Naive thymus-derived CD4-positive, alpha-beta T cell (primary cell): ENCODE measurements at regions of chr19 and their contacts with region 1.

Region 1: DNA sequence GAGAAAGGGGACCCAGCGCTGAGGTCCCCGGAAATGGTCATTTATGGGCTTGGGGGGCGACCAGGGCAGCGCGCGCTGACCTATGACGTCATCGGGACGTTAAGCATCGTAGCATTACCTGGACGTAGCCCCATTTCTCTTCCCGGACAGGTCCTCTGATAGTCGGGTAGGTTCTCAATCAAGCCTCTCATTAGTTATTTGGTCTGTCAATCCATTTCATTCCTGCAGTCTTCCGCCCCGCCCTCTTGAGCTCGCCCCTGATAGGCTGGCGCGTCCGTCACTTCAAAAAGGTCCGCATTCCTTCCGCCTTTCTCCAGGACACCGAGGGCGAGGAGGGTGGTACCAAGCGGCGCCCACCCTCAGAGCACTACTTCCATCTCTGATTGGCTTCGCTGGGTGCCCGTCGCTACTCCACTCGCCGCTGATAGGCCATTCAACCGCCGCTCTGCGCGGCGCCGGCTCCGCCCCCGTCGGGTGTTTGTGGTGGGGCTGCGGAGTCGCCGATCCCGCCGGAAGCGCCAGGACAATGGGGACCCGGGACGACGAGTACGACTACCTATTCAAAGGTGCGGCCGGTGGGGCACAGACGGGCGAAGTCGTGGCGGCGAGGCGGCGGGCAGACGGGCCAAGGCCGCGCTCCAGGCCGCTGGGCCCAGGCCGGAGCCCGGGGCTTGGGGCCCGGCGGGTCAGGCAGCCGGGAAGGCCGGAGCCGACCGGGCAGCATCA is at the start of gene RAB11B:
- DNase-seq: peak; percentile 81 to 99 (median 98)
- ATAC-seq: peak; percentile 93
- H3K4me3 ChIP-seq: peak within 1 kb of the TSS; percentile 87
- H3K4me3 Mint-ChIP-seq: peak within 1 kb of the TSS; percentile 87 to 98 (median 92)
- H3K27ac ChIP-seq: peak within 1 kb of the TSS; percentile 98
- H3K27ac Mint-ChIP-seq: peak within 1 kb of the TSS; percentile 82 to 98 (median 93)
- H3K4me1 ChIP-seq: peaks cover 4 to 8% of the 10 kb centered on the region in 2 donors
- H3K4me1 Mint-ChIP-seq: peaks cover 18 to 36% (median 28%) of the 10 kb centered on the region in 7 donors
- H3K27me3 ChIP-seq: no peaks in the 10 kb centered on the region
- H3K27me3 Mint-ChIP-seq: no peaks in the 10 kb centered on the region
- total RNA-seq, gene RAB11B: 77.4 to 113 (median 103) TPM

Region 2: DNA sequence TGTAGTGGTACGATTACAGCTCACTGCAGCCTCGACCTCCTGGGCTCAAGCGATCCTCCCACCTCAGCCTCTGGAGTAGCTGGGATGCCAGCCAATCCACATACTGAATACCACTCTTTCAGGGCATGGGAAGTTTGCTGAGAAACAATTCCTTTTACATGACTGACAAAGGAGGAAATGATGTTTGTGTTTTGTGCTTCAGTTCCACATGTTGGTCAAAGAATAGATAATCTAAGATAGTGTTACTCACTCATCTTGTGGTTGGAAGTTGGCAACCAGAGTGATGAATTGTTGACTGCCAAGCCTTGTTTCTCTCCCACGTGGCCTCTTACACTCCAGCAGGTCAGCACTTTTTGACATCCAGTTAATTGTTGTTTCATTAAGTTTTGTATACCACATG is 1376.4 kb before region 1 on chr19:
- CTCF ChIA-PET with region 1: no interaction called
- POLR2A ChIA-PET with region 1: no interaction called
- intact Hi-C with region 1: no loop called
- DNase-seq: no peak
- ATAC-seq: peak; percentile 79
- H3K4me3 ChIP-seq: no peak overlapping the region
- H3K4me3 Mint-ChIP-seq: no peak overlapping the region
- H3K27ac ChIP-seq: no peak overlapping the region
- H3K27ac Mint-ChIP-seq: peak overlapping the region in 2 of 9 donors; percentile 0 to 10
- H3K4me1 ChIP-seq: peaks cover 13 to 18% of the 10 kb centered on the region in 2 donors
- H3K4me1 Mint-ChIP-seq: peaks cover 9 to 45% (median 34%) of the 10 kb centered on the region in 7 donors
- H3K27me3 ChIP-seq: no peaks in the 10 kb centered on the region
- H3K27me3 Mint-ChIP-seq: no peaks in the 10 kb centered on the region

Region 3: DNA sequence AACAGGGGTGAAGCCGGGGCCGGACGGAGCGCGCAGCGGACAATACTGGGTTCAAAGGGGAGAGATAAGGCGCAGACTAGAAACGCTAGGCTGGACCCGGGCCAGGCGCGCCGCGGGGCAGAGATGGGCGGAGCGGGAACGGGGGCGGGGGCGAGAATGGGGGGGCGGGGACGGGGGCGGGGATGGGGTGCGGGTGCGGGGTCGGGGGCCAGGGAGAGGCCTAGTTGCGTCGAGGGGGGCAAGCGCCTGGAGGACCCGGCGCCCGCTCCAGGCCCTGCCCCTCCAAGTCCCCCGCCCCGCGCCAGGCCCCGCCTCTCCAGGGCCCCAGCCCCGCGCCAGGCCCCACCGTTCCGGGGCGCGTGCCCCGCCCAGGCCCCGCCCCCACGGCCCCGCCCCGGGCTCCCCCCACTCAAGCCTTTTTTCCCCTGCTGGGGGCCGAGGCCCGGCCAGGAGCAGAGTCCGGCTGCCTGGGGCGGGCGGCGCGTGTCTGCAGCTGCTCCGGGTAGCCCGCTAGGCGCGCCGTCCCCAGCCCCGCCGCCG is 181.1 kb before region 1 on chr19 and contains the start of gene CERS4:
- CTCF ChIA-PET with region 1: no interaction called
- POLR2A ChIA-PET with region 1: no interaction called
- intact Hi-C with region 1: loop called in 1 of 2 experiments (anchors 2 kb)
- DNase-seq: peak in 4 of 9 donors; percentile 69 to 82 (median 77)
- ATAC-seq: peak; percentile 92
- H3K4me3 ChIP-seq: peak within 1 kb of the TSS; percentile 84
- H3K4me3 Mint-ChIP-seq: peak within 1 kb of the TSS; percentile 72 to 94 (median 90)
- H3K27ac ChIP-seq: peak within 1 kb of the TSS; percentile 96
- H3K27ac Mint-ChIP-seq: peak within 1 kb of the TSS; percentile 72 to 96 (median 83)
- H3K4me1 ChIP-seq: peaks cover 5 to 17% of the 10 kb centered on the region in 2 donors
- H3K4me1 Mint-ChIP-seq: peaks cover 19 to 30% (median 27%) of the 10 kb centered on the region in 7 donors
- H3K27me3 ChIP-seq: no peaks in the 10 kb centered on the region
- H3K27me3 Mint-ChIP-seq: peaks cover 0 to 9% (median 0%) of the 10 kb centered on the region in 5 donors
- total RNA-seq, gene CERS4: 17.2 to 32.4 (median 27.4) TPM

Region 4: GRCh38 chr19:8321060-8321985 is 68.7 kb before region 1 on chr19 and contains the starts of genes NDUFA7 and RPS28:
- CTCF ChIA-PET with region 1: no interaction called
- POLR2A ChIA-PET with region 1: interaction called, 3 read pairs
- intact Hi-C with region 1: loop called (anchors 1 kb)
- DNase-seq: peak; percentile 94 to 97 (median 96)
- ATAC-seq: peak; percentile 98
- H3K4me3 ChIP-seq: peak within 1 kb of the TSS; percentile 98
- H3K4me3 Mint-ChIP-seq: peak within 1 kb of the TSS; percentile 90 to 99 (median 98)
- H3K27ac ChIP-seq: peak within 1 kb of the TSS; percentile 96
- H3K27ac Mint-ChIP-seq: peak within 1 kb of the TSS; percentile 94 to 99 (median 98)
- H3K4me1 ChIP-seq: peaks cover 25% of the 10 kb centered on the region in 2 donors
- H3K4me1 Mint-ChIP-seq: peaks cover 16 to 44% (median 29%) of the 10 kb centered on the region in 7 donors
- H3K27me3 ChIP-seq: no peaks in the 10 kb centered on the region
- H3K27me3 Mint-ChIP-seq: no peaks in the 10 kb centered on the region
- total RNA-seq, gene NDUFA7: 16.8 to 50.3 (median 30.0) TPM
- total RNA-seq, gene RPS28: 2,319 to 4,111 (median 3,327) TPM

Region 5: GRCh38 chr19:8363803-8364771 is 26.0 kb before region 1 on chr19 and contains the start of gene ANGPTL4:
- CTCF ChIA-PET with region 1: no interaction called
- POLR2A ChIA-PET with region 1: no interaction called
- intact Hi-C with region 1: loop called in 1 of 2 experiments (anchors 1 kb)
- DNase-seq: peak in 7 of 9 donors; percentile 11 to 79 (median 28)
- ATAC-seq: peak; percentile 82
- H3K4me3 ChIP-seq: peak within 1 kb of the TSS; percentile 13
- H3K4me3 Mint-ChIP-seq: peak within 1 kb of the TSS; percentile 44 to 94 (median 87)
- H3K27ac ChIP-seq: no peak within 1 kb of the TSS
- H3K27ac Mint-ChIP-seq: peak within 1 kb of the TSS in 7 of 9 donors; percentile 48 to 88 (median 57)
- H3K4me1 ChIP-seq: no peaks in the 10 kb centered on the region
- H3K4me1 Mint-ChIP-seq: peaks cover 7 to 21% (median 13%) of the 10 kb centered on the region in 7 donors
- H3K27me3 ChIP-seq: peaks cover 0 to 4% of the 10 kb centered on the region in 2 donors
- H3K27me3 Mint-ChIP-seq: peaks cover 33 to 48% (median 38%) of the 10 kb centered on the region in 5 donors
- total RNA-seq, gene ANGPTL4: 1.1 TPM in 1 of 5 experiments, not detected in the others

Region 6: GRCh38 chr19:8444645-8445487 is 54.8 kb after region 1 on chr19 and contains the start of gene HNRNPM:
- CTCF ChIA-PET with region 1: no interaction called
- POLR2A ChIA-PET with region 1: interaction called, 4 read pairs
- intact Hi-C with region 1: loop called (anchors 1 kb)
- DNase-seq: peak; percentile 100
- ATAC-seq: peak; percentile 97
- H3K4me3 ChIP-seq: peak within 1 kb of the TSS; percentile 89
- H3K4me3 Mint-ChIP-seq: peak within 1 kb of the TSS; percentile 87 to 100 (median 98)
- H3K27ac ChIP-seq: peak within 1 kb of the TSS; percentile 98
- H3K27ac Mint-ChIP-seq: peak within 1 kb of the TSS; percentile 95 to 99 (median 98)
- H3K4me1 ChIP-seq: peaks cover 33 to 38% of the 10 kb centered on the region in 2 donors
- H3K4me1 Mint-ChIP-seq: peaks cover 31 to 50% (median 42%) of the 10 kb centered on the region in 7 donors
- H3K27me3 ChIP-seq: no peaks in the 10 kb centered on the region
- H3K27me3 Mint-ChIP-seq: no peaks in the 10 kb centered on the region
- total RNA-seq, gene HNRNPM: 175 to 280 (median 272) TPM

Region 7: GRCh38 chr19:8592231-8593009 is 202.4 kb after region 1 on chr19:
- CTCF ChIA-PET with region 1: interaction called, 3 read pairs
- POLR2A ChIA-PET with region 1: no interaction called
- intact Hi-C with region 1: loop called in 1 of 2 experiments (anchors 5 kb)
- DNase-seq: peak; percentile 80 to 98 (median 96)
- ATAC-seq: peak; percentile 93
- H3K4me3 ChIP-seq: peak overlapping the region; percentile 81
- H3K4me3 Mint-ChIP-seq: peak overlapping the region; percentile 81 to 95 (median 88)
- H3K27ac ChIP-seq: peak overlapping the region; percentile 63
- H3K27ac Mint-ChIP-seq: peak overlapping the region; percentile 17 to 89 (median 76)
- H3K4me1 ChIP-seq: peaks cover 5 to 15% of the 10 kb centered on the region in 2 donors
- H3K4me1 Mint-ChIP-seq: peaks cover 6 to 37% (median 29%) of the 10 kb centered on the region in 7 donors
- H3K27me3 ChIP-seq: no peaks in the 10 kb centered on the region
- H3K27me3 Mint-ChIP-seq: peaks cover 0 to 29% (median 0%) of the 10 kb centered on the region in 5 donors